H1 (cell line): ENCODE measurements at regions of chr14 and their contacts with region 1.

Region 1: DNA sequence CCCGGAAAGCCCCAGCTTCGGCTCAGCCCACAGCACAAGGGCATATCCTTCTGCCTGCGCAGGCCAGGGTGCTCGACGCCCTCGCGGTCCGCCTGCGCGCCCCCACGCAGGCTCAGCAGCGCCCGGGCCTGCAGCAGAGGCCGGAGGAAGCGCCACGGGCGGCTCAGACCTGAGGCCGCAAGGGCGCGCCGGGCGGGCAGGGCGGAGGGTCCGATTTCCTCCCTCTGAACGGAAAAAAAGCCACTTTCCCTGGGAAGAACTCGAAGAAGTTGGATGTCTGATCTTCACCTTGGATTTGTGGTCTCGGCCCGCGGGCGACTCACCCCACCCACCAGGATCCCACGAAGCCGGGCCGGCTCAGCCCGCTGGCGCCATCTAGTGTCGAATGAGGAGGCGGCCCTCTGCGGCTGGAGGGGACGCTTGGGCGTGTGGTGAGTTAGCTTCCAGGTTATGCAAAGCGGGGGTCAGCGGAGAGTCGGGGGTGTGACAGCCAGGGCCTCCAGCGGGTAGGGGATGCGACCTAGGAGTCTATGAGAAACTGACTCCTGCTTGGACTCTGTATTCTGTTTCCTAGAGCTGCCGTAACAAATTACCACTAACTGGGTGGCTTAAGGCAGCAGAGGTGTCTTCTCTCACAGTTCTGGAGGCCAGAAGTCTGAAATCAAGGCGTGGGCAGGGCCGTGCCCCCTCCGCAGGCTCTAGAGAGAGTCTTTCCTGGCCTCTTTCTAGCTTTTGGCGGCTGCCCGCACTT is 40.0 kb upstream of the SRSF5 start:
- DNase-seq: peak in 1 of 2 experiments; percentile 93
- H3K4me3 ChIP-seq: peak overlapping the region in 3 of 4 experiments; percentile 16 to 52 (median 34); a peak in 5 of 8 replicates
- H3K27ac ChIP-seq: no peak overlapping the region
- H3K4me1 ChIP-seq: no peaks in the 10 kb centered on the region; a peak in 3 of 7 replicates
- H3K27me3 ChIP-seq: peaks cover 0 to 11% (median 9%) of the 10 kb centered on the region in 4 experiments; a peak in 5 of 7 replicates
- CTCF ChIP-seq: peak; percentile 91 to 97 (median 92)
- EP300 ChIP-seq: 0 out of 3 replicates have a peak, but pooled peaks of 1 of the 2 experiments have one; percentile 35
- POLR2A ChIP-seq: no peak
- RAD21 ChIP-seq: peak; percentile 94 to 99

Region 2: DNA sequence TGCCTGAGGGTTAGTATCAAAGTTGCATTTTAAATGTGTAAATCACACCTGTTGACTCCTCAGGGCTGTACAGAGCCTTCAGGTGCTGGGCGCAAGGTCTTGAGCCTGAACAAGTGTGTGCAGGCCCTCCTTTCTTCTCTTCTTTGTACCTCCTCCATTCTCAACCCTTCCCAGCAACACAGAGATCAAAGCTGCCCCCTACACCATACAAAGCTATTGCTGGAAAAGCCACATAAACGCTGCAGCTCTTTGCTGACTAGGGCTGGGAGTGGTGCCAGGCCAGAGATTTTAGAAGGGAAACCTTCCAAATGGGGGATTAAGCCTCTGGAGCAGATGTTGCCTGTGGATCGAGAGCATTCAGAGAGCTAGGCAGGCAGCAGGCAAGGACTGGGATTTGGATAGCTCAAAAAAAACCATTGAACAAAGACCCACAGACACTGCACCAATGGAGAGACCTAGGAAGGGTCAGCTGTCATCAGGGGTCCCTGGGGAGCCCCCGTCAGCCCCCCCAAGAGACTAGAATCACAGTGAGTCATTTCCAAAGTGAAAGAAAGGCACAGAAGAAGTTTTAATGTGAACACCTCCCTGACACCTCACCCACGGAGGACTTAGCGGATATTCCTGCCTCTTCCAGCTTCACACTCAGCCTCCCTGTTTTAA is 133.8 kb before region 1 on chr14:
- CTCF ChIA-PET with region 1: interaction called, 19 read pairs
- POLR2A ChIA-PET with region 1: no interaction called
- DNase-seq: no peak
- H3K4me3 ChIP-seq: no peak overlapping the region
- H3K27ac ChIP-seq: no peak overlapping the region
- H3K4me1 ChIP-seq: no peaks in the 10 kb centered on the region
- H3K27me3 ChIP-seq: no peaks in the 10 kb centered on the region
- CTCF ChIP-seq: no peak
- EP300 ChIP-seq: no peak
- POLR2A ChIP-seq: no peak
- RAD21 ChIP-seq: no peak

Region 3: GRCh38 chr14:69673578-69674305 is 53.2 kb before region 1 on chr14:
- CTCF ChIA-PET with region 1: interaction called, 10 read pairs
- POLR2A ChIA-PET with region 1: no interaction called
- DNase-seq: no peak
- H3K4me3 ChIP-seq: no peak overlapping the region
- H3K27ac ChIP-seq: no peak overlapping the region
- H3K4me1 ChIP-seq: peaks cover 0 to 5% (median 4%) of the 10 kb centered on the region in 4 experiments; a peak in 3 of 7 replicates
- H3K27me3 ChIP-seq: no peaks in the 10 kb centered on the region
- CTCF ChIP-seq: peak in 2 of 3 experiments; percentile 14 to 23; a peak in 3 of 4 replicates
- EP300 ChIP-seq: no peak
- POLR2A ChIP-seq: no peak
- RAD21 ChIP-seq: peak; percentile 10 to 40; a peak in 3 of 4 replicates

Region 4: GRCh38 chr14:69708586-69709174 is 18.3 kb before region 1 on chr14:
- CTCF ChIA-PET with region 1: interaction called, 11 read pairs
- POLR2A ChIA-PET with region 1: interaction called, 4 read pairs
- DNase-seq: no peak
- H3K4me3 ChIP-seq: no peak overlapping the region
- H3K27ac ChIP-seq: no peak overlapping the region
- H3K4me1 ChIP-seq: peaks cover 6 to 26% (median 18%) of the 10 kb centered on the region in 4 experiments
- H3K27me3 ChIP-seq: no peaks in the 10 kb centered on the region
- CTCF ChIP-seq: peak; percentile 44 to 66 (median 60)
- EP300 ChIP-seq: no peak
- POLR2A ChIP-seq: no peak
- RAD21 ChIP-seq: peak; percentile 47 to 68

Region 5: DNA sequence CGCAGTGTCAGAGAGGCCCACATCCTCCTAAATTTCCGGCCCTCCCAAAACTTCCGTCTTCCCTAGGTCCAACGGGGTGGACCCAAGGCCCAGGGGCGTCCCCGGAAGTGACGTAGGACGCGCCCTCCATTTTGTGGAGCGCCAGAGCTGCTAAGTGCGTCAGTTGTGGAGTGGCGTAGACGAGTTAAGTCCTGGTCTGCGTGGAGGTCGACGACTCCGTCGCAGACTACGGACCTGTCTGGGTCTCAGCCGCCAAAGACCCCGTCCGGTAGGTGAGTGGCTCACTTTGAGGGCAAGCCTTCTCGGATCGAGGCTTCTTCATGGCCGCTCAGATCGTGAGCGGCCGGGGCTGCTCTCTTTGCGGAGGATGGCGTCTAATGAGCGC is 40.0 kb after region 1 on chr14 and contains the start of gene SRSF5:
- CTCF ChIA-PET with region 1: interaction called, 3 read pairs
- POLR2A ChIA-PET with region 1: interaction called, 11 read pairs
- DNase-seq: peak; percentile 88 to 95
- H3K4me3 ChIP-seq: peak within 1 kb of the TSS; percentile 95 to 100 (median 98)
- H3K27ac ChIP-seq: peak within 1 kb of the TSS; percentile 99
- H3K4me1 ChIP-seq: peaks cover 0 to 5% (median 3%) of the 10 kb centered on the region in 4 experiments; a peak in 5 of 7 replicates
- H3K27me3 ChIP-seq: no peaks in the 10 kb centered on the region
- CTCF ChIP-seq: no peak
- EP300 ChIP-seq: no peak
- POLR2A ChIP-seq: peak; percentile 99
- RAD21 ChIP-seq: no peak
- total RNA-seq, gene SRSF5: 226 and 238 TPM in 2 replicates